A673 (cell line): ENCODE measurements at regions of chr7 and their contacts with region 1.

Region 1: GRCh38 chr7:39825401-39825980 is 124.6 kb upstream of the CDK13 start:
- DNase-seq: no peak
- H3K4me3 ChIP-seq: no peak overlapping the region
- H3K27ac ChIP-seq: no peak overlapping the region
- H3K4me1 ChIP-seq: no peaks in the 10 kb centered on the region
- H3K27me3 ChIP-seq: no peaks in the 10 kb centered on the region
- CTCF ChIP-seq: no peak

Region 2: DNA sequence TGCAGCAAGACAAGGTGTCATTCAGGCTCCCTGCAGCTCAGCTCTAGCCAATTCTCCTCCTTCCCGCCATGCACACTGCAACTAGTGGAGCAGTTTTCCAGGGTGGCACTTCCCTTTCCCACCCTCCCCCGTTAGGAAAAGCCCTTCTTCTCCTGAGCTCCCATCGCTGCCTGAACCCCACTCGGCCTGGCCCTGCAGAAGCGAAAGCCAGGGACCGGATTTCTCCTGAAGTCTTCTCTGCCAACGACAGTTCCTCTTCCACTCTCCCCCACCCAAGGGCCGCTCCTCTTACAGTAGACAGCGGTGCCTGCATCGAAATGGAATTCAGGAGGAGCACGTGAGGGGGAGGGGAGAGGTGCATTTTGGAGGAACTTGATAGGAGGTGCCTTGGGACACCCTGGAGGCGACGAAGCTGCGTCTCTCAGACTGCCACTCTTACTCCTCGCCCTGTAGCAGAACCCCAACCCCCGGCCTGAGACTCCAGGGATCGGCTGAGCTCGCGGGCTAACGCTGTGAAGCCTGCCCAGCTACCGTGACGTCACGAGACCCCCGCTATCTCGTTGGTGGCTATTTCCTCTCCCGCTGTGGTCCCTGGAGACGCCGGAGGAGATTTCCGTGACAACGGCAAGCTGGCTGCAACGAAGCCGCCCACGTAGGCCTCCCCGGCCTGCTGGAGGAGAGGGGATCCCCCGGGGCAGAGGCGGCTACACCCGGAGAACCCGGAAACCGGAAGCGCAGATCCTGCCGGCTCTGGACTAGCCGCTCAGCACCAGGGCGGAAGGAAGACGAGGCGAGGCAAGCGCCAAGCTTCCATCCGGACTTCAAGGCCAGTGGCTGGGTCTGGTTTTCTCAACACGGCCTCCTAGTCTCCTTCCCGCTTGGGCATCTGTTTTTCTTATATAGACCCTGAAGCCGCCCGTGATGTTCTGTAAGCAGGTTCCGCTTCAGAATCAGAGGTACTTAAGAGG is 92.4 kb before region 1 on chr7:
- CTCF ChIA-PET with region 1: no interaction called
- POLR2A ChIA-PET with region 1: interaction called, 10 read pairs
- intact Hi-C with region 1: no loop called
- DNase-seq: peak; percentile 98
- H3K4me3 ChIP-seq: peak overlapping the region; percentile 54
- H3K27ac ChIP-seq: peak overlapping the region; percentile 76
- H3K4me1 ChIP-seq: peaks cover 22% of the 10 kb centered on the region
- H3K27me3 ChIP-seq: no peaks in the 10 kb centered on the region
- CTCF ChIP-seq: no peak